Motor neuron (in vitro differentiated cells): ENCODE measurements at regions of chr19 and their contacts with region 1.

Region 1: GRCh38 chr19:10269333-10270179 is 1.4 kb upstream of the ICAM1 start:
- ATAC-seq: peak; percentile 17 to 88 (median 76)
- H3K4me3 ChIP-seq: peak overlapping the region in 3 of 5 donors; percentile 8 to 32 (median 16)
- H3K27ac ChIP-seq: no peak overlapping the region
- H3K4me1 ChIP-seq: peaks cover 0 to 3% of the 10 kb centered on the region in 2 donors

Region 2: GRCh38 chr19:10380313-10381102 is 111.0 kb after region 1 on chr19 and contains the start of gene TYK2:
- in situ Hi-C with region 1: loop called (anchors 5 to 25 kb)
- ATAC-seq: peak; percentile 92 to 98 (median 95)
- H3K4me3 ChIP-seq: peak within 1 kb of the TSS; percentile 77 to 99 (median 83)
- H3K27ac ChIP-seq: peak within 1 kb of the TSS; percentile 81 to 95
- H3K4me1 ChIP-seq: peaks cover 10 to 11% of the 10 kb centered on the region in 2 donors
- total RNA-seq, gene TYK2: 29.4 to 110 (median 62.1) TPM

Region 3: GRCh38 chr19:10388957-10389356 is 119.4 kb after region 1 on chr19:
- in situ Hi-C with region 1: loop called (anchors 5 to 25 kb)
- ATAC-seq: peak; percentile 48 to 72 (median 58)
- H3K4me3 ChIP-seq: no peak overlapping the region
- H3K27ac ChIP-seq: no peak overlapping the region
- H3K4me1 ChIP-seq: no peaks in the 10 kb centered on the region

Region 4: DNA sequence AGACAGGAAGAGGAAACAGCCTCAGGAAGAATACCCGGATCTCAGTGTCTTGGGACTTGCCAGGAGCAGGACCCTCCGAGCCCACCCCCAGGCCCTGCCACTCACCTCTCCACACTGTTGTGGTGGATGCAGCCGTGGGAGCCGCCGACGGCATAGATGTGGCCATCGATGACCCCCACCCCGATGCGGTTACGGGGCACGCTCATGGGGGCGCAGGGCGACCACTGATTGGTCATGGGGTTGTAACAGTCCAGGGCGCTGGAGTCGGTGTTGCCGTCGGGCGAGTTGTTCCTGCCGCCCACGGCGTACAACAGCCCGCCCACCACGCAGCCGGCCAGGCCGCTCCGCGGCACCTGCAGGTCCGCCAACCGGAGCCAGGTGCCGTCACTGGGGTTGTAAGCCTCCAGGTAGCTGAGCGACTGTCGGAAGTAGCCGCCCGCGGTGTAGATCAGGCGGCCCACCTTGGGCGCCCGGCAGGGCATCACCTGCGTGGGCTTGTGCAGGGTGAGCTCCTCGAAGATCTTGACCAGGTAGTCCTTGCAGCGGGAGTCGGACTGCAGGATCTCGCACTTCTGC is 222.0 kb after region 1 on chr19:
- in situ Hi-C with region 1: no loop called
- ATAC-seq: peak in 2 of 8 experiments; percentile 10 to 12
- H3K4me3 ChIP-seq: no peak overlapping the region
- H3K27ac ChIP-seq: no peak overlapping the region
- H3K4me1 ChIP-seq: no peaks in the 10 kb centered on the region